ENCODE measurements at regions of chr19 and their contacts with region 1.

Region 1: GRCh38 chr19:44796701-44797115 is 12.2 kb upstream of the BCAM start:
- DNase-seq: no peak
- H3K4me3 ChIP-seq: no peak overlapping the region
- H3K27me3 ChIP-seq: no peaks in the 10 kb centered on the region
- CTCF ChIP-seq: no peak

Region 2: DNA sequence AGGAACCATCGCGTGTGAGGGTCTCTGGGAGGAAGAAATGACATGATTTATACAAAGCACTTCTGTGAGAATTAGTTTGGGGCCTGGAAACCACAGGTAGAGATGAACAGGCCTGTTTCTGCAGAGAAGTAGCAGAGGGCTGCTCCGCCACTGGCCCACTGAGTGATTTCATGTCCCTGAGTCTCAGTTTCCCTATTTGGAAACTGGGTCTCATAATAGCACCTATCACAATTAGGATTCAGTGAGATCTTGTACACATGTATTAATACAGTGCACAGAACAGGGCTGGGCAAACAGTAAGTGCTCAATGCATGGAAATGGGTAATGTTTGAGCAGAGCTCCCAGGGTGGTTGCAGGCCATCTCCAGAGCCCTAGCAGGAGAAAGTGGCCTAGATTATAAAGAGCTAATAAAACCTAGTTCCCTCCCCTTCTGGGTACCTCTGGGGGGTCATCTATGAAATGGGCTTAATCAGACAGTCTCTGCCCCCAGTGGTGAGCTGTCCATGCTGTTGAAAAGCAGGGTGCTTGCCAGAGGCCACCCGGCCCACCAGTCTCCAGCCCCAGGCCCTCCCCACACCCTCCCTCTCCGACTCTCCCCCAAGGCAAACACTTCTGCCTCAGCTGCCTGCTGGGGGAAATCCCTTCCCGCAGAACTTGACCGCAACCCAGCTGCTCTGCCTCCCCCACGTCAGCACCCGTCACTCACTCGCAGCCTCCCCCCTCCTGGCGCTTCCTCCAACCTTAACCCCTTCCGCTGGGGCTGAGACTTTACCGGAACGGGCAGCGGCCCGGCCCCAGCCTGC is 43.7 kb before region 1 on chr19:
- CTCF ChIA-PET with region 1: no interaction called
- POLR2A ChIA-PET with region 1: no interaction called
- DNase-seq: peak; percentile 78
- H3K4me3 ChIP-seq: peak overlapping the region; percentile 44
- H3K27me3 ChIP-seq: no peaks in the 10 kb centered on the region
- CTCF ChIP-seq: peak; percentile 11; the same call in 1 of the 2 replicates

Region 3: DNA sequence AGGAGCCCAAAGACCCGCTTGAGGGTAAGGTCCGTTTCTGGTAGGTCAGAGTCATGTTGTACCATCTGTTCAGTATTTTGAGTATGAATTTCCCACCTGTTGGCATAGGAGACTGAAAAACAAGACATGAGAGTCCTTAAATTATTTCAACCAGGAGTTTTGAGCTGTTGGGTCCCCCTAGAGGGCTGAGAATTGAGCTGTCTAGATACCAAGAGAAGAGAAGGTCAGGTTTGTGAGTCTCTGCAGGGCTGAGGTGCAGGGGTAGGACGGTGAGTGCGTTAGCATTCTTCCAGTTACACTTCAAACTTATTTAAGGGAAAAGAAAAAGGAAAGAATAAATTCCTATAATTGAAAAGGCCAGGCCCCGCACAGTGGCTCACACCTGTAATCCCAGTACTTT is 14.0 kb before region 1 on chr19:
- CTCF ChIA-PET with region 1: interaction called, 24 read pairs
- POLR2A ChIA-PET with region 1: no interaction called
- DNase-seq: no peak
- H3K4me3 ChIP-seq: no peak overlapping the region
- H3K27me3 ChIP-seq: no peaks in the 10 kb centered on the region
- CTCF ChIP-seq: no peak; the same call in 1 of the 2 replicates